CD8-positive, alpha-beta memory T cell (primary cell): ENCODE measurements at regions of chr6 and their contacts with region 1.

Region 1: DNA sequence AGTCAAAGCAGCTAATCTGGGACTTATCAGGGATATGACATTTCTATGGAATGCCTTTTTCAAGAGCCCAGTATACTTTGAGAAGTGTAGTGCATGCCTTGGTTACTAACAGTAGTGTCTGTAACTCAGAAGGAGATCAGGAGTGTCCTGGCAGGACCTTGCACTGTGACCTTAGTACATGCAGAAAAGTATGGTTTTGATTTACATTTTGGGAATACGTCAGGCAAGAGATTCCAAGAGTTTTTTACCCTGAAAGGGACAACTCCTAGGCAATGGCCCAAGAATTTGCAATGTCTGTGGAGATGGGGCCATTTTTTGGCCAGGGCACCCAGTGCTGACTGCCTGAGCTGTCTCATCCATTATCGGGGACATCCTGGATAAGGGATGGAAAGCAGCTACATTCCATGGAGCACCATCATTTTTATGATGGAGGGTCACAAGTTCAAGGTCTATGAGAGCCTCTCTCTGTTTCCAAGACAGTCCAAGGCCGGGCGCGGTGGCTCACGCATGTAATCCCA is 80.2 kb downstream of the FAM50B start:
- DNase-seq: no peak
- H3K4me3 ChIP-seq: no peak overlapping the region
- H3K4me3 Mint-ChIP-seq: no peak overlapping the region
- H3K27ac ChIP-seq: no peak overlapping the region
- H3K27ac Mint-ChIP-seq: no peak overlapping the region
- H3K4me1 ChIP-seq: no peaks in the 10 kb centered on the region
- H3K4me1 Mint-ChIP-seq: no peaks in the 10 kb centered on the region
- H3K27me3 ChIP-seq: no peaks in the 10 kb centered on the region
- H3K27me3 Mint-ChIP-seq: peaks cover 0 to 4% of the 10 kb centered on the region in 2 donors

Region 2: GRCh38 chr6:3742426-3743344 is 186.7 kb before region 1 on chr6:
- CTCF ChIA-PET with region 1: interaction called, 13 read pairs
- POLR2A ChIA-PET with region 1: no interaction called
- DNase-seq: peak; percentile 73 to 89 (median 84)
- H3K4me3 ChIP-seq: peak overlapping the region; percentile 11
- H3K4me3 Mint-ChIP-seq: peak overlapping the region; percentile 31 to 87 (median 63)
- H3K27ac ChIP-seq: no peak overlapping the region
- H3K27ac Mint-ChIP-seq: peak overlapping the region in 6 of 8 donors; percentile 7 to 79 (median 57)
- H3K4me1 ChIP-seq: peaks cover 6% of the 10 kb centered on the region
- H3K4me1 Mint-ChIP-seq: peaks cover 9 to 13% (median 11%) of the 10 kb centered on the region in 3 donors
- H3K27me3 ChIP-seq: peaks cover 5% of the 10 kb centered on the region
- H3K27me3 Mint-ChIP-seq: peaks cover under 1 to 34% of the 10 kb centered on the region in 2 donors

Region 3: DNA sequence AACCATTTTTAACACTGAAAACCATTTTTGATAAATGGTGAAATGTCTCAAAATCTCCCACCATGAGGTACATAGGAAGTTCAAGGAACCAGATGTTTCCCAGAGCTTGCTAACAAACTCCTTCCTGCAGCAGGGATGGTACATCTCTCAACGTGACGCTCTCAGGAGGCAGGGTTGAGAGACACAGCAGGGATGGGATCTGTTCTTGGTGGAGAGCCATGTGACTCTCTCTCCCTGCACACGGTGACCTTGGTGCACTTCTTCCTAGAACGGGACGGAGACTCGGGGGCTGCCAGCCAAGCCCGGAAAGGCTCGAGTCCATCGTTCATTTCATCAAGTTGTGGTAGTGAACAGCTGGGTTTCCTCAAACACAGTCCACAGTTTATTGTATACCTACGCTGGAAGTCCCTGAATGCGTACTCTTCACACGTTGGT is 14.0 kb after region 1 on chr6:
- CTCF ChIA-PET with region 1: no interaction called
- POLR2A ChIA-PET with region 1: no interaction called
- DNase-seq: no peak
- H3K4me3 ChIP-seq: no peak overlapping the region
- H3K4me3 Mint-ChIP-seq: no peak overlapping the region
- H3K27ac ChIP-seq: no peak overlapping the region
- H3K27ac Mint-ChIP-seq: no peak overlapping the region
- H3K4me1 ChIP-seq: no peaks in the 10 kb centered on the region
- H3K4me1 Mint-ChIP-seq: peaks cover 0 to 3% (median 0%) of the 10 kb centered on the region in 3 donors
- H3K27me3 ChIP-seq: peaks cover 8% of the 10 kb centered on the region
- H3K27me3 Mint-ChIP-seq: peaks cover 12 to 60% of the 10 kb centered on the region in 2 donors